ENCODE measurements at regions of chr15 and their contacts with region 1.

Region 1: DNA sequence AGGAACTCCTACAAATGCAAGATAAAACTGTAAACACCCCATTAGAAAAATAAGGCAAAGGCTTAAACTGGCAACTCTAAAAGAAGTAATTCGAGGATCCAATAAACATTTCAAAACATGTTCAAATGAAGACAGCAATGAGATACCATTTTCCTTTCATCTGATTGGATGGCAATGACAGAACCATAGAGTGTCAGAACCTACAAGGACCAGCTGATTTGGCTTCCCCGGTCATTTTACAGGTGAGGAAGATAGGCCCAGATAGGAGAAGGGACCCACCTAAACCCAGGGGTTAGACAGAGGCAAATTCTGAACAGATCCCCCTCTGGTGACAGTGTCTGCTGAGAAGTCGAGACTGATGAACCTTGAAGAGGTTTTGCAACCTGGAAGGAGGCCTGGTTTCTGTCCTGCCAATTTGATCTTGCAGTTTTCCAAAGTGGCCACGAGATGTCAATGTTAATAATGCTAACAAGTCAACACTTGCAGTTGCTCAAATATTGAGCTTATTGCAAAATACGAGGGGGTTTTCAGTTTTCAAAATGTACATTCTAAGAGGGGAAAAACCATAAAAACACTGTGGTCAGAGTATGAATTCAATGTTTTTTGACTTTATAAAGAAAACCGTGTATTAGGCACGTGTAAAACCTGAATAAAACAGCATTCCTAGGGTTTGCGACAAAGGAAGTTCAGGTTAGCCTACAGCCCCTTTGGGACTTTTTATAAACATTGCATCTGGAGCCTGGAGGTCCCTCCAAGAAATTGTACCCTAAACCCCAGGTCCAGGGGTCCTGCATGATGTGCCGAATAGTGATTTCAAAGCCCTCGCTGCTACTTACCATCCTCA is 21.5 kb downstream of the CFAP161 start:
- DNase-seq: peak in 1 of 3 donors; percentile 30
- ATAC-seq: no peak
- H3K4me3 ChIP-seq: no peak overlapping the region
- H3K4me1 ChIP-seq: no peaks in the 10 kb centered on the region
- CTCF ChIP-seq: peak; percentile 18

Region 2: DNA sequence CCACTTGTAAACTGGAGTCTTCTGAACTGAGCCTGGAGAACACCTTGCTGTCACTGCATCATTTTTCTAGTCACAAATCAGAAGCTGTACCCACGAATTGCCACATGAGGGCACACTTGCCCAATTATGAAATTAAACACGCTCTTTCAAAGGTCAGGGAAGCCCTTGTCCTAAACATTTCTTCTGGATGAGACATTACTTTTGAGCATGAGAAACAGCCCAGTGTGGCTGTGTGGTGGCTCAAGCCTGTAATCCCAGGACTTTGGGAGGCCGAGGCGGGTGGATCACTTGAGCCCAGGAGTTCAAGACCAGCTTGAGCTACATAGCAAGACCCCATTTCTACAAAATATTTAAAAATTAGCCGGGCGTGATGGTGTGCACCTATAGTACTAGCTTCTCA is 49.0 kb before region 1 on chr15:
- intact Hi-C with region 1: loop called in 1 of 2 experiments (anchors 2 kb)
- DNase-seq: peak in 2 of 3 donors; percentile 28 to 60
- ATAC-seq: peak; percentile 67
- H3K4me3 ChIP-seq: no peak overlapping the region
- H3K4me1 ChIP-seq: no peaks in the 10 kb centered on the region
- CTCF ChIP-seq: peak; percentile 48

Region 3: GRCh38 chr15:81265944-81266775 is 110.6 kb after region 1 on chr15:
- intact Hi-C with region 1: loop called (anchors 1 to 10 kb)
- DNase-seq: peak; percentile 71 to 93 (median 83)
- ATAC-seq: peak; percentile 95
- H3K4me3 ChIP-seq: no peak overlapping the region
- H3K4me1 ChIP-seq: peaks cover 6% of the 10 kb centered on the region
- CTCF ChIP-seq: peak; percentile 94

Measured in mucosa of descending colon (tissue), 3 donors.